ENCODE measurements at regions of chr2 and their contacts with region 1.

Region 1: DNA sequence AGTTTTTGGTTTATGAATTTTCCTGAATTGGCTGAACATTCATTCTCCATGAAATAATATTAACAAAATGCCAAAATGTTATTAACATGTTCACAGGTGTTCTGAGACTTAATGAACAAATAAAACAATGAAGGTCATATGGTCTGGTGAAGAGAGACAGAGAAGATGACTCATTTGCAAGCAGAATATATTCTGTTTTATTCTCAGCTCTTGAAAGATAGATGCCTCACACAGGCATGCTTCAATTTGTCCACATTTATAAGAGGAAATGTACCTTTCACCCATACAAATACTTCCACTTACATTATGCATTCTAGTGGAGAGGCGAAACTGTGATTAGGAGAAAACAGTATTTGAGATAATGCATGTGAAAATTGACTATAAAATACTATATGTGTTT is 75.4 kb upstream of the PGAP1 start:
- DNase-seq: no peak
- H3K4me3 ChIP-seq: no peak overlapping the region
- H3K27ac ChIP-seq: no peak overlapping the region
- H3K4me1 ChIP-seq: no peaks in the 10 kb centered on the region
- H3K27me3 ChIP-seq: no peaks in the 10 kb centered on the region
- CTCF ChIP-seq: no peak
- POLR2A ChIP-seq: no peak

Region 2: DNA sequence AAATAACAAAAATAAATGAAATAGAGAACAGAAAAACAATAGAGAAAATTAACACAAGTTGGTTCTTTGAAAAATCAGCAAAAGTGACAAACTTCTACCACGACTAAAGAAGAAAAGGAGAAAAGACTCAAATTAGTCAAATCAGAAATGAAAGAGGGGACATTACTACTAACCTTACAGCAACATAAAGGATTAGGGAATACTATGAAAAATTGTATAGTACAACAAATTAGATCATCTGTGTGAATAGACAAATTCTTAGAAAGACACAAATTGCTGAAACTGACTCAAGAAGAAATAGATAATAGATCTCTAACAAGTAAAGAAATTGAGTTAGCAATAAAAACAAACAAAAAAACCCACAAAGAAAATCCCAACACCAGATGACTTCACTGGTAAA is 27.0 kb before region 1 on chr2:
- intact Hi-C with region 1: loop called (anchors 2 kb)
- DNase-seq: no peak
- H3K4me3 ChIP-seq: no peak overlapping the region
- H3K27ac ChIP-seq: no peak overlapping the region
- H3K4me1 ChIP-seq: no peaks in the 10 kb centered on the region
- H3K27me3 ChIP-seq: no peaks in the 10 kb centered on the region
- CTCF ChIP-seq: no peak
- POLR2A ChIP-seq: no peak